HEK293T (cell line): ENCODE measurements at regions of chr1 and their contacts with region 1.

Region 1: GRCh38 chr1:113072757-113073478 is at the start of gene LRIG2:
- DNase-seq: peak; percentile 97

Region 2: GRCh38 chr1:112882271-112882744 is 190.6 kb before region 1 on chr1:
- CTCF ChIA-PET with region 1: interaction called, 13 read pairs
- POLR2A ChIA-PET with region 1: interaction called, 4 read pairs
- DNase-seq: no peak

Region 3: GRCh38 chr1:112896783-112897182 is 176.1 kb before region 1 on chr1:
- CTCF ChIA-PET with region 1: no interaction called
- POLR2A ChIA-PET with region 1: no interaction called
- DNase-seq: no peak

Region 4: DNA sequence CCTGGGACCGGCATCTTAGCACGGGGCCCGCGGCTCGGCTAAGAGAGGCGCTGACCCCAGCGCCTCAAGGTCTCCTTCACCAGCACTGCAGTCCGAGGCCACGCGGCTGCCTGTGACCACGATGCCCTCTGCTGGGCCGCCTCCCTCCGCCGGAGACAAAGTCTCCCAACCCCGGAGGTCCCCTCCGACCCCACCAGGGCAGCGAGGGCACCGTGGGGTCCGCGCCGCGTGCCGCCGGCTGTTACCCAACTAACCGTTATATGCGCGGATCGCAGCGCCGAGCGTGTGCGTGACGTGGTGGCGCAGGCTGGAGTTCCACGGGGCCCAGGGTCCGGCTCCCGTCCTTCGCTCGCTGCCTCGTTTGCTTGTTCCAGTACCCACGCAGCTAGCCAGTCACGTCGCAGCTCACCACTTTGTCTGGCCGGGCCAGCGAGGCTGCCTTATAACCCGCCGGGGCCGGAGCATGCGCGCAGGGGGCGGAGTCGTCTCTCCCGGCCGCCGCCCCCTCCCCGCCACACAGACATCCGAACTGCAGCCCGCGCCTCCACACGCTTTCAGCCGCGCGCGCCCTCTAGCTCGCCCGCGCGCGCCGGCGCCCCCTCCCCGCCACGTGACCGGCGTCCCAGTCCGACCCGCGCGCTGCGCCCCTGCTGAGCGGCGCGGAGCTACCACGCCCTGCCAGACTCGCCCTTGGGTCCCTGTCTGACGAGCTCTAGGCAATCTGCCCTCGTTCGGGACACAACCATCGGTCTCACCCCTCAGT is 117.0 kb before region 1 on chr1 and contains the start of gene SLC16A1:
- CTCF ChIA-PET with region 1: no interaction called
- POLR2A ChIA-PET with region 1: interaction called, 14 read pairs
- DNase-seq: peak; percentile 95

Region 5: DNA sequence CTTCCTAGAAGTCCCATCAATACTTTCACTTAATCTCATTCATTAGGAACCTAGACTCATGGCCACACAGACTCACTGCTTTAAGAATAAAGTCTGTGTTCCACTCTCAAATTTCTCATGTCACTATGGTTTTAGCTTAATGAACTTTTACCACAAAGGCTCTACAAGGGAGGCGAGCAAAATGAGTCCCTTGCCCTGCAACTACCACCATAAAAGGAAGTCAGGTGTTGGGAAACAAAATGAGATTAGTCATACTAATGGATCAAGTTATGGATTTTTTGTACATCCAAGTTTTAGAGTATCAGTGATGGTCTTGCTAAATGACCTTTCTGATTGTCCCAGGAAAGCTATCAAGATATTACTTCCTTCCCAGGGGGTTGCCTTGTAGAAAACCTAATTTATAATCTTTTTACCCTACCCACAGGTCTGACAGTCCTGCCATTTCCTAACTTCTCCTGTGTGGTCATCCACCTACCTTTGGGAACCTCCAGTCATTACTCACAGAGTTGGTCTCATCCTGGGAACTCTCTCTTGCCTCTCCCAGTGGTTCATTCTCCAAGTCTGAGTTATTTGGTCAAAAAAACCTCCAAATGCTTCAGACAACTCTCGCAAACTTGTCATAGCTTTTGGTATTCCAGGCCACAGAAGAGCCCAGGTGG is 65.1 kb before region 1 on chr1:
- CTCF ChIA-PET with region 1: no interaction called
- POLR2A ChIA-PET with region 1: no interaction called
- DNase-seq: no peak

Region 6: GRCh38 chr1:113042285-113043143 is 30.4 kb before region 1 on chr1:
- CTCF ChIA-PET with region 1: interaction called, 3 read pairs
- POLR2A ChIA-PET with region 1: interaction called, 10 read pairs
- DNase-seq: peak; percentile 75

Region 7: DNA sequence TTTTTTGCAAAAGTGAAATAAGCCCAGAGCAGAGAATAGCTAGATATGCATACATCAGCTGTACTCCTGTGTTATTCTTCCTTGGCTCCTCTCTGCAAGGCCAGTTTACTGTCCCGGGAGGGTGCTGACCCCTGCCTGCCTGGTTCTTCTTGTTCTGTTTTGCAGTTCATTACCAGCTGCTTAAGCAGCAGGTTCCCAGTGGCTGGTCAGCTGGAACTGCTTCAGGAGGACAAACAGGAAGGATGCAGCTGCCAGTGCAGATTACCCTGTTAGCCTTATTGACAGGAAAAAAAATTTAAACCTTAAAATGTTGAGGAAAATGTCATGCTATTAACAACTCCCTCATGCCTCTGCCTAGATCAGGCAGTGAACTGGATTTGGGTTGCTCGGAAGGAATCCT is 15.9 kb before region 1 on chr1:
- CTCF ChIA-PET with region 1: interaction called, 44 read pairs
- POLR2A ChIA-PET with region 1: interaction called, 12 read pairs
- DNase-seq: no peak

Region 8: DNA sequence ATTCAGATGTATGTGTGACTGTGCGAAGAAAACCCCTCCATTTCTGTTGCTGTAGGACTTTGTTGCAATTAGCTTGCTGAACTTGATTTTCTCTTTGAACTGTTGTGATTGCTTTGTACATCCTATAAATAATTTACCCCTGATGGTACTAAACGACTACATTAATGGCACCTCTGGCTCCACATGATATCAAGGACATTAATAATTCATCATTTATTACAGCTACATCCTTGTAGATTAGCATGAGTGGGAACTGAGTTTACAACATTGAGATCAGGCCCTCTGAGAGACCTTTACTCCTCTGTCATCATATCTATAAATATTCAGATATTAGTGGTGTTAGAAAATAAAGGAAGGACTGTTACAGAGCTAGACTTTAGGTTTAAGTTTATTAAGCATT is 13.6 kb after region 1 on chr1:
- CTCF ChIA-PET with region 1: interaction called, 11 read pairs
- POLR2A ChIA-PET with region 1: interaction called, 10 read pairs
- DNase-seq: no peak